ENCODE measurements at regions of chr6 and their contacts with region 1.

Region 1: DNA sequence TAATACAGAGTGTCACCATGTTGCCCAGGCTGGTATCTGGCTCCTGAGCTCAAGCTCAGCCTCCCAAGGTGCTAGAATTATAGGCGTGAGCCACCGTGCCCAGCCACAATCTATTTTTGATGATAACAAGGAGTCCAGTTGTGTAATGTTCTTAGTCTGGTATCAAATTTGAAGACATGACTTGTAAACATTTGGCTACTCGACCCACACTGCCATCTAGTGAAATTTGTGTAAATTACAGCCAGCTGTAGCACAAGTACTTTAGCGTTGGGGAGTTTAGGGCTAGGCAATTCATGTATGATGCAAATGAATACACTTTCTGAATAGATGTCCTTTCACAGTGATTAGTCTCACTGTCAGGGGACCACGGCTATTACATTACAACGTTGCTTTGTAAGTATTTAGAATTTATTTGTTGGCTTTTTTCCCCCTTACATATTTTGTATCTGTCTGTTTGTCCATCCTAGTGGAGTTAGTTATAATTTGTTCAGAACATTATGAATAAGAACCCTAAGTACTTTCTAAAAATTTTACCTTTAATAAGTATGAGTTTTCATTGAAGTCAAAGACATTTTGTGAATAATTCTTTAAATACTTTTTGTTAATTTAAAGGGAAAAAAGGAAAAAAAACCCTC is 139.7 kb downstream of the PRDM13 start:
- DNase-seq: peak; percentile 47 to 59
- H3K4me3 ChIP-seq: no peak overlapping the region
- H3K27ac ChIP-seq: no peak overlapping the region
- H3K4me1 ChIP-seq: no peaks in the 10 kb centered on the region
- H3K27me3 ChIP-seq: no peaks in the 10 kb centered on the region
- CTCF ChIP-seq: peak; percentile 94

Region 2: GRCh38 chr6:99330159-99330558 is 416.2 kb before region 1 on chr6:
- CTCF ChIA-PET with region 1: no interaction called
- POLR2A ChIA-PET with region 1: no interaction called
- intact Hi-C with region 1: loop called (anchors 5 kb)
- DNase-seq: peak; percentile 31 to 59
- H3K4me3 ChIP-seq: no peak overlapping the region
- H3K27ac ChIP-seq: no peak overlapping the region
- H3K4me1 ChIP-seq: no peaks in the 10 kb centered on the region
- H3K27me3 ChIP-seq: no peaks in the 10 kb centered on the region
- CTCF ChIP-seq: peak; percentile 89

Region 3: GRCh38 chr6:99467509-99468106 is 278.8 kb before region 1 on chr6:
- CTCF ChIA-PET with region 1: no interaction called
- POLR2A ChIA-PET with region 1: no interaction called
- intact Hi-C with region 1: loop called (anchors 1 kb)
- DNase-seq: no peak
- H3K4me3 ChIP-seq: no peak overlapping the region
- H3K27ac ChIP-seq: no peak overlapping the region
- H3K4me1 ChIP-seq: no peaks in the 10 kb centered on the region
- H3K27me3 ChIP-seq: no peaks in the 10 kb centered on the region
- CTCF ChIP-seq: peak; percentile 80

Region 4: GRCh38 chr6:99520855-99521632 is 225.3 kb before region 1 on chr6:
- CTCF ChIA-PET with region 1: no interaction called
- POLR2A ChIA-PET with region 1: interaction called, 20 read pairs
- intact Hi-C with region 1: no loop called
- DNase-seq: peak; percentile 73 to 82
- H3K4me3 ChIP-seq: peak overlapping the region; percentile 61
- H3K27ac ChIP-seq: peak overlapping the region; percentile 45
- H3K4me1 ChIP-seq: peaks cover 12% of the 10 kb centered on the region
- H3K27me3 ChIP-seq: no peaks in the 10 kb centered on the region
- CTCF ChIP-seq: peak; percentile 85

Region 5: DNA sequence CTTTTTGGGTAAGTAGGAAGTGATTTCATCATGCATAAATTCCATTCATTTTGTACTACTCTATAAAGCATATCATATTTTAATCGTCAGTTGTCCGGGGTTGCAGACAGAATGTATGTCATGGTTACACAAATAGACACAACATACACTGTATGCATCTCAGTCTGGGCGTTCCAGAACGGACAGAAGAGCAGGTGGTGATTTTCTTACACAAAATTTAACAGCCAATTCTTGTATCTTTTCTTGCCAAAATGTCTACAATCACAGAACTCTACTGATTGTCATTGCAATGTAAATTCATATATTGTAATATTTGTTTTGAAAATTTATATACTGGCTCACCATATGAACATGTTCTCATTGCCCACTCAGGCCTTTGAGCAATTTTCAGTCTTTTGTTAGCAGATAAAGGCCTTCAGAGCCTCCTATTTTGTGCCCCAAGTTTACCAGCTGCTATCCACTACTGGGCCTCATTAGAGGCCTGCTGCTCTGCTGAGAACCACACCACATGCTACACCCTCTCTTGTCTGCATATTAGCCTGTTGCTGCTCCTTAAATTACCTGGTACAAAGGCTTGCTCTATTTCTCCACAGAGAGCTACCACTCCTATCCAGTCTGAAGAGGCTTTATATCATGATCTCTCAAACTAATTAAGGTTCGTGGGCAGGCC is 78.2 kb before region 1 on chr6:
- CTCF ChIA-PET with region 1: no interaction called
- POLR2A ChIA-PET with region 1: no interaction called
- intact Hi-C with region 1: no loop called
- DNase-seq: no peak
- H3K4me3 ChIP-seq: no peak overlapping the region
- H3K27ac ChIP-seq: no peak overlapping the region
- H3K4me1 ChIP-seq: no peaks in the 10 kb centered on the region
- H3K27me3 ChIP-seq: peaks cover 4% of the 10 kb centered on the region; the same call in 1 of the 2 replicates
- CTCF ChIP-seq: no peak